IMR-90 (cell line): ENCODE measurements at regions of chr15 and their contacts with region 1.

Region 1: GRCh38 chr15:49199666-49200065 is 29.6 kb downstream of the GALK2 start:
- DNase-seq: peak; percentile 63
- ATAC-seq: peak; percentile 75
- H3K4me3 ChIP-seq: no peak overlapping the region
- H3K27ac ChIP-seq: no peak overlapping the region
- H3K4me1 ChIP-seq: peaks cover 2% of the 10 kb centered on the region; the same call in 1 of the 2 replicates
- H3K27me3 ChIP-seq: no peaks in the 10 kb centered on the region
- CTCF ChIP-seq: no peak
- POLR2A ChIP-seq: no peak
- RAD21 ChIP-seq: no peak

Region 2: DNA sequence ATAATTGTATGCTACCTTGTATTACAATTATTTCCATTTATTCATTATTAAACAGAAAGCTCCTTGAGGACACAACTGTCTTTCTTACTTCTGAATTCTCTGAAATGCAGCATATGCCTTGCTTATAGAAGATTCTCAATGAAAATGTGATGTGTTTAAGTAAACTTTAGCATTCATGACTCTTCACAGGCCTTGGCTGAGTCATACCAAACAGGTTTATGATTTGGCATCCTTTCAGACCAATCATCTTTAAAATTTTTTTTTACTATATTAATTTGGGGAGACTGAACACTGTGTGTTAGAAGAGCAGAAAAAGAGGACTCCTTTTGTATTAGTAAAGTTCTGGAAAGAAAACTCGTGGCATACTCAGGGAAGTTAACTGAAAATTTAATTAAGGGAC is 36.0 kb before region 1 on chr15:
- CTCF ChIA-PET with region 1: no interaction called
- POLR2A ChIA-PET with region 1: no interaction called
- dilution Hi-C with region 1: no loop called
- in situ Hi-C with region 1: no loop called
- intact Hi-C with region 1: loop called (anchors 5 kb)
- DNase-seq: peak; percentile 53
- ATAC-seq: no peak; the same call in 1 of the 2 replicates
- H3K4me3 ChIP-seq: no peak overlapping the region
- H3K27ac ChIP-seq: no peak overlapping the region
- H3K4me1 ChIP-seq: no peaks in the 10 kb centered on the region
- H3K27me3 ChIP-seq: no peaks in the 10 kb centered on the region
- CTCF ChIP-seq: no peak
- POLR2A ChIP-seq: no peak
- RAD21 ChIP-seq: no peak

Region 3: DNA sequence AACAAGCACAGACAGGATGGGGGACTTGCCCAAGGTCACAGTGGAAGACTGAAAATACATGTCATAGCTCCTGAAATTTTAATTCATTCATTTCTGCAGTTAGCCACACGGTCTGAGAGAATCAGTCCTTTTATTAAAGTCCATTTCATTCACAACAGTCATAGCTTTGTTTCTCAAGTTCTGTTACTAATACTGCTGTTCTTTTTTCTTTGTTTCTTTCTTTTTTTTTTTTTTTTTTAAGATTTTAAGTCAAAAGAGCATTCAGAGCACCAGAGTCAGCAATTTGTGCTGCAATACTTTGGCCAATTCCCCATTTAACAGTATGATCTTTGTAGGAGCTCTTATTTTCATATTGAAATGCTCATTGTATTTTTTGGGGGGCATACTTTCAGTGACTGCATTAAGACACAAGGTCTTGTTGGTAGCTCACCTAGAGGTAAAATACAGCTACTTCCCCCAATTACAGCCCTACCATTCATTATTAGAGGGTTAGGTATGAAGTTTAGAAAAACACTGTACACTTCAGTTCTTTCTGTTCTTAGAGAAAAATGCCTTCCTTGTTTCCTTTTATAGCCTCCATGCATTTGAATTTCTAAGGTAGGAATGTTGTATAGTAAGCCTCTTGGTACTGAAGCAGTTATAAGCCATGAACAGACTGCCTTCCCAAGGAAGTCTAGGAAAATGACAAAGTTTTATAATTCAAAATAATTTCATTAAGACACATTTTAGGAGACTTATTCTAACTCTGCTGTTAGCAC is 20.1 kb before region 1 on chr15:
- CTCF ChIA-PET with region 1: no interaction called
- POLR2A ChIA-PET with region 1: interaction called, 14 read pairs
- dilution Hi-C with region 1: no loop called
- in situ Hi-C with region 1: no loop called
- intact Hi-C with region 1: no loop called
- DNase-seq: no peak
- ATAC-seq: no peak
- H3K4me3 ChIP-seq: no peak overlapping the region
- H3K27ac ChIP-seq: no peak overlapping the region
- H3K4me1 ChIP-seq: no peaks in the 10 kb centered on the region
- H3K27me3 ChIP-seq: no peaks in the 10 kb centered on the region
- CTCF ChIP-seq: no peak
- POLR2A ChIP-seq: no peak
- RAD21 ChIP-seq: no peak

Region 4: DNA sequence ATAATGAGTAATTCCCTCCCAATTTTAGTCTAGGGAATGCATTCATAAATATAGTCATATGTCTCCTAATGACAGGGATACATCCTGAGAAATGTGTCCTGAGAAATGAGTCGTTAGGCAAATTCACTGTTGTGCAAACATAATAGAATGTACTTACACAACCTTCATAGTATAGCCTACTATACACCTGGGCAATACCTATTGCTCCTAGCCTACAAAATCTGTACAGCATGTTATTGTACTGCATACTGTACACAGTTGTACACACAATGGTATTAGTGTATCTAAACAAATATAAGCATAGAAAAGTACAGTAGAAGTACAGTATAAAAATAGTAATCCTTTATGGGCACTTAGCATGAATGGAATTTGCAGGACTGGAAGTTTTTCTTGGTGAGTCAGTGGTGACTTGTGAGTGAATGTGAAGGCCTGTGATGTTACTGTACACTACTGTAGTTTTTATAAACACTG is 427.8 kb after region 1 on chr15:
- CTCF ChIA-PET with region 1: no interaction called
- POLR2A ChIA-PET with region 1: no interaction called
- dilution Hi-C with region 1: no loop called
- in situ Hi-C with region 1: no loop called
- intact Hi-C with region 1: no loop called
- DNase-seq: peak; percentile 96
- ATAC-seq: peak; percentile 93
- H3K4me3 ChIP-seq: no peak overlapping the region
- H3K27ac ChIP-seq: peak overlapping the region; percentile 28; the same call in 1 of the 2 replicates
- H3K4me1 ChIP-seq: peaks cover 7% of the 10 kb centered on the region
- H3K27me3 ChIP-seq: no peaks in the 10 kb centered on the region
- CTCF ChIP-seq: no peak
- POLR2A ChIP-seq: no peak
- RAD21 ChIP-seq: no peak

Region 5: DNA sequence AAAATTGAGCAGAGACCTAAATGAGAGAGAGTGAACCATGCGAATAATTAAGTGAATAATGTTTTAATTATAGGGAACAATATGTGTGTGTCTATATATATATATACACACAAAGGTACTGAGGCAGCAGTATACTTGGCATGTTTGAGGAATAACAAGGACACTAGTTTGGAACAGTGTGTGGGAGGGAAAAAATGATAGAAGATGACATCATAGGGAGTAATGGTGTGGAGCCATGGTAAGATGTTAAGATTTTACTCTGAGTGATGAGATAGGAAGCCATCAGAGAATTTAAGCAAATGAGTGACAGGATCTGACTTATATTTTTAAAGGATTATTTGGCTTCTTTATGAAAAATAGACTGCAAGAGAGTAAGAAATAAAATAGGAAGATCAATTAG is 450.3 kb after region 1 on chr15:
- CTCF ChIA-PET with region 1: no interaction called
- POLR2A ChIA-PET with region 1: no interaction called
- dilution Hi-C with region 1: no loop called
- in situ Hi-C with region 1: no loop called
- intact Hi-C with region 1: no loop called
- DNase-seq: peak; percentile 35
- ATAC-seq: no peak
- H3K4me3 ChIP-seq: no peak overlapping the region
- H3K27ac ChIP-seq: no peak overlapping the region
- H3K4me1 ChIP-seq: peaks cover 7% of the 10 kb centered on the region
- H3K27me3 ChIP-seq: no peaks in the 10 kb centered on the region
- CTCF ChIP-seq: no peak
- POLR2A ChIP-seq: no peak
- RAD21 ChIP-seq: no peak